ENCODE measurements at regions of chr2 and their contacts with region 1.

Region 1: GRCh38 chr2:219530048-219530963 is 13.3 kb downstream of the CHPF start:
- DNase-seq: peak; percentile 91 to 97
- ATAC-seq: peak; percentile 92
- H3K4me3 ChIP-seq: no peak overlapping the region
- H3K27ac ChIP-seq: no peak overlapping the region
- H3K4me1 ChIP-seq: no peaks in the 10 kb centered on the region
- H3K27me3 ChIP-seq: no peaks in the 10 kb centered on the region

Region 2: DNA sequence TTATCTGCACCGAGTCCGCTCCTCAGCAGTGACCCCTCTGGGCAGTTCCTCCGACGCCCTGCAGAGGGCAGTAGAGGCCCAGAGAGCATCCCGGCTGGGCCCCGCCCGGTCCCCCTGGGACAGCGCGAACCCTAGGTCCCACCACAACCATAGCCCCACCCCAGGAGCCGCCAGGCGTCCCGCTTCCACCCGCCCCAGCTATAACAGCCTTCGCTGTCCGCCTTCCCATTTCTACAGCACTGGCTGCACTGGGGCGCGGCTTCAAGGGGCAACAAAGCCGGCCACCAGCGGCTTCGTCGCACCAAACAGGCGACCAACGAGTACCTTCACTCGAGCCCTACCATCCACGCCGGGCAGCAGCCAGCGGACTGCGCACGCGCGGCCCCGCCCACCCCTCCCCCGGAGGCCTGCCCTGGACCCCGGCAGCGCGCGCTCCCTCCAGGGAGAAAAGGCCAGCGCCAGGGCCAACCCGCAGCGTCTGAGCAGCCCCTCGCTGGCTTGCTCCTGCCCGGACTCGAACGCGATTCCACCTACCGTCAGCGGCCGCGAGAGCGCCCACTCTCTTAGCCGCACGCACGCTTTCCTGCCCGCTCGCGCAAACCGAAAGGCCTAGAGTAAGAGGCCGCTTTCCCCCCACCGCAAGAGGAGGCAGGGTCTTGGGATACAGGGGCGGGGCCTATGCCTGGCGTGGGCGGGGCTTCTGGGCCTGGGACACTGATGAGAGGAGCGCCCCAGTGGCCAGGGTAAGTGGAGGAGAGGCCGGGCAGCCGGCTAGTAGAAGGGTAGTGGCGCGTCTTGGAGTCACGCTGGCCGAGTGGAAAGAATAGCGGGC is 369.9 kb before region 1 on chr2 and contains the start of gene NHEJ1:
- intact Hi-C with region 1: loop called in 1 of 2 experiments (anchors 10 kb)
- DNase-seq: peak; percentile 98 to 99
- ATAC-seq: peak; percentile 98
- H3K4me3 ChIP-seq: peak within 1 kb of the TSS; percentile 20 to 73
- H3K27ac ChIP-seq: peak within 1 kb of the TSS in 1 of 2 donors; percentile 83
- H3K4me1 ChIP-seq: no peaks in the 10 kb centered on the region
- H3K27me3 ChIP-seq: no peaks in the 10 kb centered on the region
- total RNA-seq, gene NHEJ1: 6.8 to 9.8 TPM

Region 3: GRCh38 chr2:219388127-219388844 is 142.0 kb before region 1 on chr2:
- intact Hi-C with region 1: no loop called
- DNase-seq: peak; percentile 99 to 100
- ATAC-seq: peak; percentile 94
- H3K4me3 ChIP-seq: no peak overlapping the region
- H3K27ac ChIP-seq: peak overlapping the region in 1 of 2 donors; percentile 7
- H3K4me1 ChIP-seq: no peaks in the 10 kb centered on the region
- H3K27me3 ChIP-seq: no peaks in the 10 kb centered on the region

Region 4: GRCh38 chr2:219402665-219403515 is 127.4 kb before region 1 on chr2:
- intact Hi-C with region 1: loop called (anchors 1 to 2 kb)
- DNase-seq: peak; percentile 78 to 79
- ATAC-seq: peak; percentile 76
- H3K4me3 ChIP-seq: no peak overlapping the region
- H3K27ac ChIP-seq: no peak overlapping the region
- H3K4me1 ChIP-seq: peaks cover 0 to 2% of the 10 kb centered on the region in 2 donors
- H3K27me3 ChIP-seq: no peaks in the 10 kb centered on the region

Region 5: GRCh38 chr2:219484343-219485200 is 45.7 kb before region 1 on chr2:
- intact Hi-C with region 1: no loop called
- DNase-seq: no peak
- ATAC-seq: no peak
- H3K4me3 ChIP-seq: no peak overlapping the region
- H3K27ac ChIP-seq: no peak overlapping the region
- H3K4me1 ChIP-seq: no peaks in the 10 kb centered on the region
- H3K27me3 ChIP-seq: no peaks in the 10 kb centered on the region

Region 6: DNA sequence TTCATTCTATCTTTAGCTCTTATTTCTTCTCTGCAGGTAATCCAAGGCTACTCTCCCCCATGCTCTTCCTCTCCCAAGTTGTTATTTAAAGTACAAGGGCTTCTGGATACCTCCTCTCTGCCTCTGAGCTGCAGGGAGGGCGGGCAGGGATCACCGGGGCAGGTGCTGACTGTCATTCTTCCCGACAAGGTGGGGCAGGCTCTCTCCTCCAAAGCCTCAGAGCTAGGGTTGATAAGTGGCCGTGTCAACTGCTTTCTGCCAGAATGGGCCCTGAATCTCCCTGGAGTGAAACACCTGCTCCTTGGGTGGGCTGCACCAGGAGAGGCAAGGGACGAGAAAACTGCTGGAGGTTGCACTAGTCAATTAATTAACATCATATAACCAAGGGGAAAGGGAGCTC is 347.4 kb after region 1 on chr2:
- intact Hi-C with region 1: no loop called
- DNase-seq: no peak
- ATAC-seq: no peak
- H3K4me3 ChIP-seq: no peak overlapping the region
- H3K27ac ChIP-seq: no peak overlapping the region
- H3K4me1 ChIP-seq: no peaks in the 10 kb centered on the region
- H3K27me3 ChIP-seq: no peaks in the 10 kb centered on the region